Activated CD4-positive, alpha-beta T cell treated with anti-CD3 and anti-CD28 coated beads, Interleukin-2, amount 10 ng/mL, durations not matched to agents 24 days and 14 days (primary cell): ENCODE measurements at regions of chr6 and their contacts with region 1.

Region 1: DNA sequence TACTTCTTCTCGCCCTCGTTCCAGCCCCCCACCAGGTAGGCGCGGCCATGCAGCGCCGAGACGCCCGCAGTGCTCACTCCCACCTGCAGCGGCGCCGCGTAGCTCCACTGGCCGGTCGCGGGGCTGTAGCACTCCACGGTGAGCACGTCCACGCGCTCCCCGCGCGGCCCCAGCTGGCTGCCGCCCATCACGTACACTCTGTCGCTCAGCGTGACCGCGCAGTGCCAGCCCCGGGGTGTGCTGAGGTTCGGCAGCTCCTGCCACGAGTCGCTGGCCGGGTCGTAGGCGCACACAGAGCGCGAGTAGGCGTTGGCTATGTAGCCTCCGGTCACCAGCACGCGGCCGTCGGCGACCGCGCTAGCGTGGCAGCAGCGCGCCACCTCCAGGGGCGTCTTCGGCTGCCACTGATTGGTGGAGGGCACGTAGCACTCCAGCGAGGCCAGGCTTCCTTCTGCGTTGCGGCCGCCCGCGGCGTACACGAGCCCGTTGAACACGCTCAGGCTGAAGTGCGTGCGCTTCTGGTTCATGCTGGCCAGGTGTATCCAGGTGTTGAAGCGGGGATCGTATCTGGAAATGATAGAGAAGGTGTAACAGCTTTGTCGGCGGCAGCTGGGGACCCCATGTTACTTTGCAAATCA is 13.7 kb downstream of the KLHL31 start:
- DNase-seq: peak; percentile 92
- H3K4me3 Mint-ChIP-seq: peak overlapping the region; percentile 90
- H3K27ac Mint-ChIP-seq: peak overlapping the region; percentile 95
- H3K4me1 Mint-ChIP-seq: peaks cover 22% of the 10 kb centered on the region
- H3K27me3 Mint-ChIP-seq: peaks cover 23% of the 10 kb centered on the region

Region 2: GRCh38 chr6:53691667-53692133 is 39.8 kb after region 1 on chr6:
- intact Hi-C with region 1: no loop called
- DNase-seq: no peak
- H3K4me3 Mint-ChIP-seq: no peak overlapping the region
- H3K27ac Mint-ChIP-seq: no peak overlapping the region
- H3K4me1 Mint-ChIP-seq: no peaks in the 10 kb centered on the region
- H3K27me3 Mint-ChIP-seq: peaks cover 18% of the 10 kb centered on the region

Region 3: DNA sequence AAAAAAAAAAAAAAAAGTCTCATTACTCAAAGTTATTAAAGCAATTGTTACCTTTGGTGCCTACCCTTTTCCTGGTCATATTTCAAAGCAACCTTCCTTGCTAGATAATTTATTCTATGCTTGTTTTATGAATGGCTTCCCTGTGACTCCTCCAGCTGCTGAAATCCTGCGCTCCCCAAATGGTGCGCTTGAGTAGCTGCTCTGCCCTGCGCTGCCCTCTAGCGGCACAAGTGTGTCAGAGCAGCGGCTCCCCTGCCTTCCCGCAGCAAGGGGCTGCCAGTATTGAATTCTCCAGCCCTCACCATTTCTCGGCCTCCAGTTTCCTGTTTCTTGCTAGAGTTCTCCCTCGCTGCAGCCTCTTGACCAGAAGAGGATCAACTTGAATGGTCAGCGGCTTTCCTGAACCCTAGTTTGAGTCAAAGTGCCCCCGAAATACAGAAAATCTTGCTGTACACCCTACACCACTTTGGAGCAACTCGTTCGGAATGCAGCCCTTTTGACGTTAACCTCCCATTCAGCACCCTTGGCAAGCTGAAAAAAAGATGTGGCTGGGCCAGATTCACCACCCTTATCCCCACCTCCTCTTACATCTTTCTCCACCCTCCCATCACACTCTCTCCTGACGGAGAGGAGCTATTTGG is 74.0 kb after region 1 on chr6:
- intact Hi-C with region 1: loop called (anchors 2 kb)
- DNase-seq: peak; percentile 93
- H3K4me3 Mint-ChIP-seq: no peak overlapping the region
- H3K27ac Mint-ChIP-seq: no peak overlapping the region
- H3K4me1 Mint-ChIP-seq: peaks cover 8% of the 10 kb centered on the region
- H3K27me3 Mint-ChIP-seq: peaks cover 23% of the 10 kb centered on the region